CD14-positive monocyte (primary cell): ENCODE measurements at regions of chr19 and their contacts with region 1.

Region 1: GRCh38 chr19:11597202-11598102 is at the start of gene ZNF627:
- DNase-seq: peak; percentile 99 to 100 (median 99)
- H3K4me3 ChIP-seq: peak within 1 kb of the TSS; percentile 60 to 93 (median 93)
- H3K4me3 Mint-ChIP-seq: peak within 1 kb of the TSS; percentile 93 to 95
- H3K27ac ChIP-seq: peak within 1 kb of the TSS; percentile 85 to 90
- H3K27ac Mint-ChIP-seq: peak within 1 kb of the TSS; percentile 87 to 97 (median 95)
- H3K4me1 ChIP-seq: peaks cover 13 to 16% of the 10 kb centered on the region in 2 donors
- H3K4me1 Mint-ChIP-seq: peaks cover 19% of the 10 kb centered on the region
- H3K27me3 ChIP-seq: no peaks in the 10 kb centered on the region
- H3K27me3 Mint-ChIP-seq: peaks cover 0 to 2% (median 2%) of the 10 kb centered on the region in 3 donors
- CTCF ChIP-seq: peak; percentile 31
- polyA plus RNA-seq, gene ZNF627: 1.7 to 3.7 (median 3.4) TPM

Region 2: GRCh38 chr19:11505032-11505503 is 92.4 kb before region 1 on chr19:
- intact Hi-C with region 1: loop called in 1 of 2 experiments (anchors 5 kb)
- DNase-seq: peak; percentile 91 to 94 (median 93)
- H3K4me3 ChIP-seq: peak overlapping the region; percentile 62 to 91 (median 66)
- H3K4me3 Mint-ChIP-seq: peak overlapping the region; percentile 81 to 84
- H3K27ac ChIP-seq: peak overlapping the region; percentile 58 to 90
- H3K27ac Mint-ChIP-seq: peak overlapping the region in 6 of 7 donors; percentile 62 to 91 (median 79)
- H3K4me1 ChIP-seq: peaks cover 17 to 22% of the 10 kb centered on the region in 2 donors
- H3K4me1 Mint-ChIP-seq: peaks cover 16% of the 10 kb centered on the region
- H3K27me3 ChIP-seq: no peaks in the 10 kb centered on the region
- H3K27me3 Mint-ChIP-seq: peaks cover 0 to 1% (median 0%) of the 10 kb centered on the region in 3 donors
- CTCF ChIP-seq: no peak

Region 3: DNA sequence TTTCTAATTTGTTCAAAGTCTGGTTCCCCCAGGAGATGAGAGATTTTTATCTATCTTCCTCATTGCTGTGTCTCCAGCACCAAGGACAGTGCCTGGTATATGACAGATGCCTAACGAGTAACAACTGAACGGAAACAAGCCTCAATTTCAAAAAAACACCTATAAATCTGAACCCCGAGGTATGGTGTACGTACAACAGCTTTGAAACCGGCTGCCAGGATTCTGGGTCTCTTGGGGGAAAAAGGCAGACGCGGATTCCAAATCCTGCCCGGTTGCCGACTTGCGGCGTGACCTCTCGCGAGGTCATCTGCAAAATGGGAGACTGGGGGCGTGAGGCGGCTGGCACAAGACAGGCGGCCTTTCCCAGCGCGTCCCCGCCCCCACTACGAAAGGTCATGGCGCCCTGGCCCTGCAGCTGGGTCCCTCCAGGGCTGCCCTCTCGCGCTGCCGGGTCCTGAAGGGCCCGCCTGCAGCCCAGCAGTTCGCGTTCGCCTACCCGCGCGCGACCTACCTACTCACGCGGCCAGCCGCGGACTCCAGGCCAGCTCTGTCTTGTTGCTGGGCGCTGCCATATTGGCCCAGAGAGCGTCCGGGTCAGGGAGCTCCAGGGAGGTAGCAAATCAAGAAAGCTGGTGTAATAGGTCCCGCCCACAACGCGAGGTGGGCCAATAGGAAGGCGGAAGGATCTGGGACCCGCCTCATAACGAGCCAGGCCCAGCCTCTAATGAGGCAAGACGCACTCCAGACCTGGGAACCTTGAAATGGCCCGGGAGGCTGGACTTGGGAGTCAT is 68.7 kb before region 1 on chr19 and contains the start of gene ECSIT:
- intact Hi-C with region 1: no loop called
- DNase-seq: peak; percentile 97 to 99 (median 98)
- H3K4me3 ChIP-seq: peak within 1 kb of the TSS; percentile 52 to 87 (median 60)
- H3K4me3 Mint-ChIP-seq: peak within 1 kb of the TSS; percentile 95 to 98
- H3K27ac ChIP-seq: peak within 1 kb of the TSS; percentile 63 to 81
- H3K27ac Mint-ChIP-seq: peak within 1 kb of the TSS; percentile 93 to 97 (median 95)
- H3K4me1 ChIP-seq: peaks cover 14 to 17% of the 10 kb centered on the region in 2 donors
- H3K4me1 Mint-ChIP-seq: peaks cover 10% of the 10 kb centered on the region
- H3K27me3 ChIP-seq: no peaks in the 10 kb centered on the region
- H3K27me3 Mint-ChIP-seq: no peaks in the 10 kb centered on the region
- CTCF ChIP-seq: no peak
- polyA plus RNA-seq, gene ECSIT: 26.4 to 31.6 (median 28.3) TPM

Region 4: DNA sequence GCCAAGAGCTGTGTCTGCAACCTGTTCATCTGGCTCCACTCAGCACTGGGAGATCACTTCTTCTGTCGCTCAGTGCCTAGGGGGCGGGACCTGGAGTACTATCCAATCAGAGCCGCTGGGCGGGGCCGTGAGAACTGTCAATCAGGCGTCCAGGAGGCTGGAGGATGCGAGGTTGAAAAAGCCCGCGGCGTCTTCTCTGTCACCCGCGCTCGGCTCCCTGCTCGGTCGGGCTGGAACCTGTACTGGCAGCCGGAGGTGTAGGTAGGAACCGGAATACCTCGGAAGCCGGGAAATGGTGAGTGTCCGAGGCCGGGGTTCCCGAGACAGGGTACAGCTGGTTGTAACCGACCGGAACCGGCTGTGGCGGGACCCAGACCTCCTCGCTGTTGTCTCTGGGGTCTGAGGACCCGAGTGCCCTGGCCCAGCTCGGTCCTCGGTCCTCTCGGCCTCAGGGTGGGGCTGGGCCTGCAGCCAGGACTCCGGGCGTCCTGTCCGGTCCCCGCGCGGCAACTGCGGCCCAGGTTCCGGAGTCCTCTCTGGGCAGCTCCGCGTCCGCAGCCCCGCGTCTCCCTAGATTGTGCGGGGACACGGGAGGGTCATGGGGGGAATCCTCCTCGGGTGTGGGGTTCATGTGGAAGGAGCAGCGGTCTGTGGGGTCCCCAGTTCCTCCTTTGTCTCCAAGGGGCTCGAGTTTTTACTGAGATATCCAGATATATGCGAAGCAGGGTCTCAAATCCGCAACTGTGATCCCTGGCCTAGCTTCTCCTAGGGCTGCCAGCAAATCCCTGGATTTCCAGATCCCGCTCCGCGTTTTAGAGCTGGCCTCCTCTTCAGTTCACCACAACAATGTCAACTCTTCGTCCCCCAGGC is 42.4 kb after region 1 on chr19:
- intact Hi-C with region 1: loop called in 1 of 2 experiments (anchors 5 kb)
- DNase-seq: peak; percentile 81 to 90 (median 82)
- H3K4me3 ChIP-seq: peak overlapping the region; percentile 60 to 86 (median 61)
- H3K4me3 Mint-ChIP-seq: peak overlapping the region; percentile 78 to 87
- H3K27ac ChIP-seq: no peak overlapping the region
- H3K27ac Mint-ChIP-seq: peak overlapping the region in 2 of 7 donors; percentile 37 to 73
- H3K4me1 ChIP-seq: peaks cover 7 to 12% of the 10 kb centered on the region in 2 donors
- H3K4me1 Mint-ChIP-seq: peaks cover 4% of the 10 kb centered on the region
- H3K27me3 ChIP-seq: no peaks in the 10 kb centered on the region
- H3K27me3 Mint-ChIP-seq: peaks cover 3 to 9% (median 8%) of the 10 kb centered on the region in 3 donors
- CTCF ChIP-seq: no peak

Region 5: DNA sequence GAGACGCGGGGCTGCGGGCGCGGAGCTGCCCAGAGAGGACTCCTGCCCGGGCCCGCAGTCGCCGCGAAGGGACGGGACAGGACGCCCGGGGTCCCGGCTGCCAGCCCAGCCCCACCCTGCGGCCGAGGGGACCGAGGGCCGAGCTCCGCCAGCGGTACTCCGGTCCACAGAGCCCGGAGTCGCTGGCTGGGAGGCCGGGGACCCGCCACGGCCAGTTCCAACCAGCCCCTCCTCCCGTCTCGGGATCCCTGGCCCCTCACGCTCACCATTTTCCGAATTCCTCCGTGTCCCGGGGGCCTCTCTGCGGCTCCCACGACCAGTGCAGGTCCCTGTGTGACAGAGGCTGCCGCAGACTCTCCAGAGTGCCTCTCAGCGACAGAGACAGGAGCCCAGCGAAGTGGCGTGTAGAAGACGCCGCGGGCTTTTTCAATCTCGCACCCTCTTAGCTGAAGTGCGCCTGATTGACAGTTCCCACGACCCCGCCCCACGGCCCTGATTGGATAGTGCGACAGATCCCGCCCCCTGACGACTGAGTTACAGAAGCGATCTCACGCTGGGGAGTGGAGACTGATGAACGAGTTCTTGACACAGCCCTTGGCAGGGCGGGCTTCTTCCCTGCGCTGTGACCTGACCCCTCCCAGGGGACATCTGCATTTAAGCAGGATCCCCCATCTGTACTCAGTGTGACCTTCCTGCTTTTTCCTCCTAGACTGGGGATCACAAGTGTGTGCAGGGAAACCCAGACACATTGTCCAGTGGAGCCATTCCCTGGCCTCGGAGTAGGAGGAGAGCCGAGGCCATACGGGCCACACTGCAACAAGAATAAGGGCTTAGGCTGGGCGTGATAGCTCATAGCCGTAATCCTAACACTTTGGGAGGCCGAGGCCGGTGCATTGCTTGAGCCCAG is 97.3 kb after region 1 on chr19:
- intact Hi-C with region 1: loop called in 1 of 2 experiments (anchors 10 kb)
- DNase-seq: peak; percentile 78 to 84 (median 80)
- H3K4me3 ChIP-seq: peak overlapping the region; percentile 74 to 79 (median 78)
- H3K4me3 Mint-ChIP-seq: peak overlapping the region; percentile 98
- H3K27ac ChIP-seq: peak overlapping the region in 1 of 2 donors; percentile 29
- H3K27ac Mint-ChIP-seq: peak overlapping the region in 6 of 7 donors; percentile 52 to 86 (median 70)
- H3K4me1 ChIP-seq: peaks cover 12 to 18% of the 10 kb centered on the region in 2 donors
- H3K4me1 Mint-ChIP-seq: peaks cover 18% of the 10 kb centered on the region
- H3K27me3 ChIP-seq: no peaks in the 10 kb centered on the region
- H3K27me3 Mint-ChIP-seq: peaks cover 4 to 19% (median 18%) of the 10 kb centered on the region in 3 donors
- CTCF ChIP-seq: no peak

Region 6: GRCh38 chr19:11705474-11705873 is 108.0 kb after region 1 on chr19:
- intact Hi-C with region 1: no loop called
- DNase-seq: no peak
- H3K4me3 ChIP-seq: no peak overlapping the region
- H3K4me3 Mint-ChIP-seq: no peak overlapping the region
- H3K27ac ChIP-seq: no peak overlapping the region
- H3K27ac Mint-ChIP-seq: peak overlapping the region in 1 of 7 donors; percentile 33
- H3K4me1 ChIP-seq: no peaks in the 10 kb centered on the region
- H3K4me1 Mint-ChIP-seq: peaks cover 5% of the 10 kb centered on the region
- H3K27me3 ChIP-seq: no peaks in the 10 kb centered on the region
- H3K27me3 Mint-ChIP-seq: peaks cover 0 to 3% (median 2%) of the 10 kb centered on the region in 3 donors
- CTCF ChIP-seq: no peak